Transverse colon (tissue), 4 donors: ENCODE measurements at regions of chr5 and their contacts with region 1.

Region 1: GRCh38 chr5:157718519-157718918 is 12.7 kb upstream of the THG1L start:
- DNase-seq: no peak
- H3K4me3 ChIP-seq: no peak overlapping the region
- H3K27ac ChIP-seq: peak overlapping the region in 2 of 4 donors; percentile 34
- H3K4me1 ChIP-seq: peaks cover 0 to 12% (median 9%) of the 10 kb centered on the region in 4 donors
- H3K27me3 ChIP-seq: no peaks in the 10 kb centered on the region
- CTCF ChIP-seq: peak; percentile 53 to 86 (median 59)
- EP300 ChIP-seq: no peak
- POLR2A ChIP-seq: no peak

Region 2: DNA sequence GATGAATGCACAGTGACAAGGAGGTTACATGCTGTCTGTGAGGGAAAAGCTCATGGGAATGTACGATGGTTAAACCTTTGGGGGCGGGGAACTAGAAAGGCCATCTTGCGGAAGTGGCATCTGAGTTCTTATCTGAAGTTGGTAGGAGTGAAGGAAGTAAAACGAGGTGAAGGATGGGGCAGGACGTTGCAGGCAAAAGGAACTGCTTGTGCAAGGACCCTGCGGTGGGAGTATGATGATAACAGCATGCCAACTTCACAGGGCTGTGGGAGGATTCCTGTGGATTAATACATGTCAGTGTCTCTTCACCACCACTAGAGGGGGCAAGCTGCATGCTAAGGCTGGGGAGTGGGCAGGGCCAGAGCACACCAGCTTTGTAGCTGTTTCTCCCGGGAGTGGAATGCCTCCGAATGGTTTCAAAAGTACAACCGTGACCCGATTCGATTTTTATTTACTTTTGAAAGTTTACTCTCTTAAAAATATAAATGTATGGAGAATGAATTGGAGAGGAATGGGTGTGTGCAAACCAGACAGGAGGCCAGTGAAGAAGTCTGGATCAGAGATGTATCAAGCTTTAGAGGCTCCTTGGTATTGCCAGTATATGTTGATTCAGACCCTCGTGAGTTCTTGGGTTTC is 390.1 kb before region 1 on chr5:
- in situ Hi-C with region 1: loop called in 1 of 4 experiments (anchors 25 kb)
- intact Hi-C with region 1: loop called (anchors 5 kb)
- DNase-seq: peak; percentile 58
- H3K4me3 ChIP-seq: peak overlapping the region in 3 of 4 donors; percentile 8 to 12 (median 11)
- H3K27ac ChIP-seq: peak overlapping the region; percentile 4 to 70 (median 25)
- H3K4me1 ChIP-seq: peaks cover 0 to 9% (median 5%) of the 10 kb centered on the region in 4 donors
- H3K27me3 ChIP-seq: no peaks in the 10 kb centered on the region
- CTCF ChIP-seq: peak; percentile 86 to 92 (median 90)
- EP300 ChIP-seq: no peak
- POLR2A ChIP-seq: no peak

Region 3: DNA sequence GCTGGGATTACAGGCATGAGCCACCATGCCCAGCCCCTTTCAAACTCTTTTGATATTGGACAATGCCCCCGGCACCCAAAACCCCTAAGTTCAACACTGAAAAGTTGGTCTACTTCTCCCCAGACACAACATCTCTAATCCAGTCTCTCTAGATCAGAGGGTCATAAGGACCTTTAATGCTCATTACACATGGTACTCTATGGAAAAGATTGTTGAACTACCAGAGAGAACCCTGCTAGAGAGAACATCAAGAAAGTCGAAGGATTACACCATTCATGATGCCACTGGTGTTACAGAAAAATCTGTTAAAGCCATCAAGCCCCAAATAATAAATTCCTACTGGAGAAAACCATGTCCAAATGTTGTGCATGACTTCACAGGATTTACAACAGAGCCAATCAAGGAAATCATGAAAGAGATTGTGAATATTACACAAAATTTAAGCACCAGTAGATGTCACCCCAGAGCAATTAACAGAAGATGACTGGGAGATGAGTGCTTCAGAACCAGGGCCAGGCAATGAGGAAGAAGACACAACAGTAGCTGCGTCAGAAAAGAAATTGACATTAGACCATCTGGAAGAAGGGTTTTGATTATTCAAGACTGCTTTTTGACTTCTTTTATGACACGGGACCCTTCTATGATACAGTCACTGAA is 286.8 kb before region 1 on chr5:
- in situ Hi-C with region 1: loop called in 2 of 4 experiments (anchors 5 to 25 kb)
- intact Hi-C with region 1: loop called (anchors 10 kb)
- DNase-seq: peak; percentile 23
- H3K4me3 ChIP-seq: no peak overlapping the region
- H3K27ac ChIP-seq: no peak overlapping the region
- H3K4me1 ChIP-seq: peaks cover 0 to 9% (median 0%) of the 10 kb centered on the region in 4 donors
- H3K27me3 ChIP-seq: no peaks in the 10 kb centered on the region
- CTCF ChIP-seq: peak; percentile 51 to 69 (median 52)
- EP300 ChIP-seq: no peak
- POLR2A ChIP-seq: no peak

Region 4: DNA sequence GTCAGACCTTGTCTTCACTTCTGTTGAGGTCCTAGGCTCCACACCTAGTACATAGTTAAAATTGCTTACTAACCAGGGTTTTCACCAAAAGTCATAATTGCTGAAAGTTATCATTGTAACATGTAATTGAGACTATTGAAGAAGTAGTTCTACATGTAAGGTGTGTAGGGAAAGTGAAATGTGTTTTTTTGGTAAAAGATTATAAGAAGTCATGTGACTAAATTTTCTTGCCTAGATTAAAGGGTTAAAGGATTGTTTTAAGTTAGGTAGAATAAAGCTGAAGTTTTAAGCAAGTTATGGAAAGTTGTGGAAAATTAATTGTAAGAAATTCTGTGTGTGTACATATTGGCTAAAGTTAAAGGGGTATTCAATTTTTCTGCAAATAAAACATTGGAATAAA is 21.1 kb before region 1 on chr5:
- in situ Hi-C with region 1: no loop called
- intact Hi-C with region 1: no loop called
- DNase-seq: no peak
- H3K4me3 ChIP-seq: no peak overlapping the region
- H3K27ac ChIP-seq: no peak overlapping the region
- H3K4me1 ChIP-seq: no peaks in the 10 kb centered on the region
- H3K27me3 ChIP-seq: no peaks in the 10 kb centered on the region
- CTCF ChIP-seq: no peak
- EP300 ChIP-seq: no peak
- POLR2A ChIP-seq: no peak

Region 5: GRCh38 chr5:157778121-157778805 is 59.7 kb after region 1 on chr5:
- in situ Hi-C with region 1: no loop called
- intact Hi-C with region 1: no loop called
- DNase-seq: peak; percentile 71
- H3K4me3 ChIP-seq: no peak overlapping the region
- H3K27ac ChIP-seq: no peak overlapping the region
- H3K4me1 ChIP-seq: no peaks in the 10 kb centered on the region
- H3K27me3 ChIP-seq: no peaks in the 10 kb centered on the region
- CTCF ChIP-seq: no peak
- EP300 ChIP-seq: no peak
- POLR2A ChIP-seq: no peak

Region 6: GRCh38 chr5:157820593-157821252 is 102.2 kb after region 1 on chr5:
- in situ Hi-C with region 1: no loop called
- intact Hi-C with region 1: no loop called
- DNase-seq: no peak
- H3K4me3 ChIP-seq: no peak overlapping the region
- H3K27ac ChIP-seq: peak overlapping the region; percentile 17 to 61 (median 44)
- H3K4me1 ChIP-seq: peaks cover 8 to 53% (median 22%) of the 10 kb centered on the region in 4 donors
- H3K27me3 ChIP-seq: no peaks in the 10 kb centered on the region
- CTCF ChIP-seq: peak; percentile 46 to 63 (median 52)
- EP300 ChIP-seq: no peak
- POLR2A ChIP-seq: no peak